Ascending aorta (tissue), 2 donors: ENCODE measurements at regions of chr22 and their contacts with region 1.

Region 1: GRCh38 chr22:39003165-39003638 is 10.9 kb upstream of the APOBEC3C start:
- DNase-seq: peak in 1 of 2 donors; percentile 86
- H3K4me3 ChIP-seq: no peak overlapping the region
- H3K27ac ChIP-seq: peak overlapping the region in 1 of 2 donors; percentile 6
- H3K4me1 ChIP-seq: peaks cover 0 to 4% of the 10 kb centered on the region in 2 donors
- H3K27me3 ChIP-seq: no peaks in the 10 kb centered on the region
- CTCF ChIP-seq: peak; percentile 66 to 79 (median 68)

Region 2: GRCh38 chr22:38927033-38927781 is 76.0 kb before region 1 on chr22:
- intact Hi-C with region 1: loop called (anchors 10 kb)
- DNase-seq: peak in 1 of 2 donors; percentile 88
- H3K4me3 ChIP-seq: peak overlapping the region; percentile 56 to 61
- H3K27ac ChIP-seq: peak overlapping the region; percentile 76 to 80
- H3K4me1 ChIP-seq: peaks cover 4 to 18% of the 10 kb centered on the region in 2 donors
- H3K27me3 ChIP-seq: no peaks in the 10 kb centered on the region
- CTCF ChIP-seq: peak; percentile 33 to 83 (median 74)

Region 3: GRCh38 chr22:39080052-39080762 is 77.0 kb after region 1 on chr22:
- intact Hi-C with region 1: no loop called
- DNase-seq: no peak
- H3K4me3 ChIP-seq: no peak overlapping the region
- H3K27ac ChIP-seq: no peak overlapping the region
- H3K4me1 ChIP-seq: peaks cover 4 to 5% of the 10 kb centered on the region in 2 donors
- H3K27me3 ChIP-seq: no peaks in the 10 kb centered on the region
- CTCF ChIP-seq: no peak

Region 4: GRCh38 chr22:39123751-39124601 is 120.8 kb after region 1 on chr22:
- intact Hi-C with region 1: loop called (anchors 5 kb)
- DNase-seq: no peak
- H3K4me3 ChIP-seq: no peak overlapping the region
- H3K27ac ChIP-seq: no peak overlapping the region
- H3K4me1 ChIP-seq: no peaks in the 10 kb centered on the region
- H3K27me3 ChIP-seq: no peaks in the 10 kb centered on the region
- CTCF ChIP-seq: no peak